Naive thymus-derived CD4-positive, alpha-beta T cell (primary cell): ENCODE measurements at regions of chr1 and their contacts with region 1.

Region 1: DNA sequence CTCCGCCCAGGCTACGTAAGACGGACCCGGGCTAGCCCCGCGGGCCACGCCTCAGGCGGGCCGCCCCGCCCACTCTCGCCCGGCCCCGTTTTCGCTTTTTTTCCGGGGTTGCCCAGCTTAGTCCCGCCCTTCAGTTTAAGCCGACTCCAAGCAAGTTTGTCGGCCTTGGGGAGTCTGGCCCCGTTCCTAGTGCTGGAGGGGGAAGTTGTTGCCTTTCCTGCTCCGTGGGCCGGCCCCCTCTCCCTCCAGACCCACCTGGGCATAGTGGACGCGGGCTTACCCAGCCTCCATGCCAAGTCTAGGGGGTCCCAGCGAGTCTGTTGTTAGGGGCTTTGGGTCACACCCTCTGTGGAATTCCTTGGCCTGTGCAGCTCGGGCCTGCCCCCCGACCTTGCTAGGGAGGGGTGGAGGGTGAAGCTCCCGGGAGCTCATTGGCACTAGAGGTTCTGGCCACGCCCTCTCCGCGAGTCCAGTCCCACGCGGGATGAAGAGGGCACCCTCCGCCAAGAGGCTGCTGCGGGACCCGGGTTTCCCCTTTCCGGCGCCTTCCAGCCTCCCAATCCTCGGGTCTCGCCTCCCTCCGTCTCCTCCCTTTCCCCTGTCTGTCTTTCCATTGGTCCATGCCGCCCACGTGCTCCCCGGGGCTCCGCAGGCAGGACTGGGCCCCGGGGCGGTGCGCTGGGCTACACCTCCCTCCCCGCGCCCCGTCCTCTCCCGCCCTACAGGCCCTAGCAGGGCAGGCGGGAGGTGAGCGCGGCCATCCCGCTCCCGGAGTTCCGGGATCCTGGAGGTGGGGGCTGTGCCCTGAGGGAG is 3.3 kb downstream of the RUSC1 start:
- DNase-seq: peak; percentile 75 to 95 (median 80)
- ATAC-seq: peak; percentile 86
- H3K4me3 ChIP-seq: peak overlapping the region; percentile 100
- H3K4me3 Mint-ChIP-seq: peak overlapping the region; percentile 80 to 91 (median 89)
- H3K27ac ChIP-seq: peak overlapping the region; percentile 90
- H3K27ac Mint-ChIP-seq: peak overlapping the region; percentile 44 to 86 (median 73)
- H3K4me1 ChIP-seq: peaks cover 0 to 12% of the 10 kb centered on the region in 2 donors
- H3K4me1 Mint-ChIP-seq: peaks cover 24 to 38% (median 31%) of the 10 kb centered on the region in 7 donors
- H3K27me3 ChIP-seq: no peaks in the 10 kb centered on the region
- H3K27me3 Mint-ChIP-seq: no peaks in the 10 kb centered on the region

Region 2: DNA sequence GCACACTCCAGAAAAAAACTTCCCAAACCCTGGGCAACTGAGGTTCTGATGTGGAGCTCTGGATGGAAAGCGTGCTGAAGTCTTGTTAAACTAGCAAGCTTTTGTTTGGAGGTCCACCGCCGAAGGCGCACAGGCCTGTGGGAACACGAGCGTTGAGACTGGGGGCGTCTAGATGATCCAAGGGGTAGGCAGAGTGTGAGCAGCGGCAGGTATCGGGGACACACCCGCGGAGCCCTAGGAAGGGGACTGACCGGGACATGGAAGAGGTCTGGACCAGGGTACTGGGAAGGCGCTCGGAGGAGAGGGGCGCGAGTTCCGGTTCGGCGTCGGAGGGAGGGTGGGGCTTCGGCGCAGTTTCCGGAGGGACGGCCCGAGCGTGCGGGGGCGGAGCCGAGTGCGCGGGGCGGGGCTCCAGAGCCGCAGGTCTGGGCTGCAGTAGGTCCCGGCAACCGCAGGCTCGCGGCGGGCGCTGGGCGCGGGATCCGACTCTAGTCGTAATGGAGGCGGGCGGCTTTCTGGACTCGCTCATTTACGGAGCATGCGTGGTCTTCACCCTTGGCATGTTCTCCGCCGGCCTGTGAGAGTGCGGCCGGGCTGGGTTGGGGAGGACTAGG is 188.5 kb before region 1 on chr1 and contains the start of gene SLC50A1:
- CTCF ChIA-PET with region 1: no interaction called
- POLR2A ChIA-PET with region 1: no interaction called
- intact Hi-C with region 1: loop called in 1 of 2 experiments (anchors 5 kb)
- DNase-seq: peak; percentile 86 to 96 (median 90)
- ATAC-seq: peak; percentile 93
- H3K4me3 ChIP-seq: peak within 1 kb of the TSS; percentile 99
- H3K4me3 Mint-ChIP-seq: peak within 1 kb of the TSS; percentile 91 to 100 (median 98)
- H3K27ac ChIP-seq: peak within 1 kb of the TSS; percentile 99
- H3K27ac Mint-ChIP-seq: peak within 1 kb of the TSS; percentile 95 to 100 (median 98)
- H3K4me1 ChIP-seq: peaks cover 8 to 15% of the 10 kb centered on the region in 2 donors
- H3K4me1 Mint-ChIP-seq: peaks cover 41 to 58% (median 46%) of the 10 kb centered on the region in 7 donors
- H3K27me3 ChIP-seq: no peaks in the 10 kb centered on the region
- H3K27me3 Mint-ChIP-seq: peaks cover 0 to 2% (median 0%) of the 10 kb centered on the region in 5 donors
- total RNA-seq, gene SLC50A1: 21.1 to 35.6 (median 24.3) TPM

Region 3: DNA sequence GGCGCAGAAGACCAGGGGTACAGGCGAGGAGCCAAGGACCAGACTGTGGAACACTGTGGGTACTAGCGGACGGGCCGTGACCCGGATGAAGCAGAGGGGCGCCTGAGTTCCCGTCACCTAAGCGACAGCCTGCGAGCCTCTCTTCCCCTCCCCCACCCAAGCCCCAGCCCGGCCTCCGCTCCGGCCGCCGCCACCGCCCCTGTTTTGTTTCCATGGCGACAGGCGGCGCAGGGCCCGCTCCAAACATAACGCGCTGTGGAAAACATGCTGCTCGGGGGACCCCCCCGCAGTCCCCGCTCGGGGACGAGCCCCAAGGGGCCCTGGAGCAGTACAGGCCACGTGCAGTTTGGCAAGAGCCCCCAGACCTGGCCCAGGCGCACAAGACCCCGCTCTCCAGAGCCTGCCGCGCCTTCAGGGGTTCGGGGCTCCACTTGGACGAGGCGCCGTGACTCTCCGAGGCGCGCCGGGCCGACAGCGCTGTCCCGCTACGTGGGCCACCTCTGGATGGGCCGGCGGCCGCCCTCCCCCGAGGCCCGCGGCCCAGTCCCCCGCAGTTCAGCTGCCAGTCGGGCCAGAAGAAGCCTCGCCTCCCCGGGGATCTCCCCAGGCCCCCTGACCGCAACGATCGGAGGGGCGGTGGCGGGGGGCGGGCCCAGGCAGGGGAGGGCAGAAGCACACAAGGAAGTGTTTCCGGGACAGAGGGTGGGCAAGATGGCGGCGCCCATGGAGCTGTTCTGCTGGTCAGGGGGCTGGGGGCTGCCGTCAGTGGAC is 115.3 kb before region 1 on chr1 and contains the start of gene MTX1:
- CTCF ChIA-PET with region 1: no interaction called
- POLR2A ChIA-PET with region 1: no interaction called
- intact Hi-C with region 1: loop called (anchors 1 kb)
- DNase-seq: peak; percentile 83 to 91 (median 88)
- ATAC-seq: peak; percentile 89
- H3K4me3 ChIP-seq: peak within 1 kb of the TSS; percentile 100
- H3K4me3 Mint-ChIP-seq: peak within 1 kb of the TSS; percentile 81 to 92 (median 88)
- H3K27ac ChIP-seq: peak within 1 kb of the TSS; percentile 100
- H3K27ac Mint-ChIP-seq: peak within 1 kb of the TSS; percentile 92 to 99 (median 96)
- H3K4me1 ChIP-seq: peaks cover 20 to 21% of the 10 kb centered on the region in 2 donors
- H3K4me1 Mint-ChIP-seq: peaks cover 19 to 30% (median 24%) of the 10 kb centered on the region in 7 donors
- H3K27me3 ChIP-seq: no peaks in the 10 kb centered on the region
- H3K27me3 Mint-ChIP-seq: no peaks in the 10 kb centered on the region
- total RNA-seq, gene MTX1: 19.5 to 40.8 (median 22.0) TPM

Region 4: DNA sequence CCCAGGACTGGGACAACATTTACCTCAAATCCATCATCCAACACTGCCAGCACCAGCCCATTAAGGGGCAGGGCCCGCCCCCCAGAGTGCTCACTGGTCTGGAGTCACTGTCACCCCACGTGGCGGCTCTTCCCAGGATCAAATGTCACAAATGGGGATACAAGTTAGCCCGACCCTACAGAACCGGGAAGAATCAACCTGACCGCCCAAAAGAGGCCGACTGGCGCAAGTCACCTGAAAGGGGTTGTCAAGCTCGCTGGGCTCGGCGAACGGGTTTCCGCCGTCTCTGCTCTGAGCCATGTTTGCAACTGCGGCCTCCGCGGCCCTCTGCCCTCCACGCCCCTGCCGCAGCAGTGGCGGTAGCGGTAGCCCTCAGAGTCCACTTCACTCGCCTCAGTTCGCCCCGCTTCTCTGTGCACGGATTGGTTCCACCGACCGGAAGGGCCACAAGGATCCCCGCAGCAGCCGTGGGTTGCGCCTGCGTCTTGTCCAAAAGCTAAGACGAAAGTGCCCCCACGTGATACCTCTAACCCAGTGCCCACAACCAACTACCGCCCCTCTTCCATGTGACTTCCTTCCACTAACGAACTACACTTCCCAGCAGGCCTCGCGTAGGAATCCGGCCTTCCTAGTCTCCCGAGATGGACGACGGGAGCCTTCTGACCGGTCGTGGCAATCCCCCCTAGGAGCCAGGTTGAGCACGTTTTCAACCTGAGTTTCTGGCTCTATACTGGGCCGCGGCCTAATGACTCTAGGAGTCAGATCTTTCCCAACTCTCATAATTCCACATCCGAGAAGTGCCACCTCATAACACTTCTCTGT is 61.9 kb before region 1 on chr1 and contains the start of gene SCAMP3:
- CTCF ChIA-PET with region 1: interaction called, 5 read pairs
- POLR2A ChIA-PET with region 1: interaction called, 15 read pairs
- intact Hi-C with region 1: no loop called
- DNase-seq: peak; percentile 52 to 89 (median 79)
- ATAC-seq: peak; percentile 99
- H3K4me3 ChIP-seq: peak within 1 kb of the TSS; percentile 88
- H3K4me3 Mint-ChIP-seq: peak within 1 kb of the TSS; percentile 81 to 100 (median 98)
- H3K27ac ChIP-seq: peak within 1 kb of the TSS; percentile 87
- H3K27ac Mint-ChIP-seq: peak within 1 kb of the TSS; percentile 89 to 98 (median 96)
- H3K4me1 ChIP-seq: peaks cover 18 to 19% of the 10 kb centered on the region in 2 donors
- H3K4me1 Mint-ChIP-seq: peaks cover 22 to 42% (median 33%) of the 10 kb centered on the region in 7 donors
- H3K27me3 ChIP-seq: no peaks in the 10 kb centered on the region
- H3K27me3 Mint-ChIP-seq: no peaks in the 10 kb centered on the region
- total RNA-seq, gene SCAMP3: 50.8 to 118 (median 100) TPM

Region 5: GRCh38 chr1:155562581-155563376 is 238.8 kb after region 1 on chr1 and contains the start of gene ASH1L:
- CTCF ChIA-PET with region 1: no interaction called
- POLR2A ChIA-PET with region 1: interaction called, 3 read pairs
- intact Hi-C with region 1: loop called (anchors 1 to 5 kb)
- DNase-seq: peak; percentile 85 to 94 (median 90)
- ATAC-seq: peak; percentile 90
- H3K4me3 ChIP-seq: peak within 1 kb of the TSS; percentile 100
- H3K4me3 Mint-ChIP-seq: peak within 1 kb of the TSS; percentile 91 to 100 (median 98)
- H3K27ac ChIP-seq: peak within 1 kb of the TSS; percentile 86
- H3K27ac Mint-ChIP-seq: peak within 1 kb of the TSS; percentile 95 to 100 (median 98)
- H3K4me1 ChIP-seq: peaks cover 26 to 32% of the 10 kb centered on the region in 2 donors
- H3K4me1 Mint-ChIP-seq: peaks cover 15 to 56% (median 47%) of the 10 kb centered on the region in 7 donors
- H3K27me3 ChIP-seq: no peaks in the 10 kb centered on the region
- H3K27me3 Mint-ChIP-seq: peaks cover 0 to 4% (median 0%) of the 10 kb centered on the region in 5 donors
- total RNA-seq, gene ASH1L: 57.2 to 109 (median 95.1) TPM

Region 6: GRCh38 chr1:156020292-156021089 is 696.5 kb after region 1 on chr1 and contains the start of gene SSR2:
- CTCF ChIA-PET with region 1: no interaction called
- POLR2A ChIA-PET with region 1: no interaction called
- intact Hi-C with region 1: loop called in 1 of 2 experiments (anchors 1 kb)
- DNase-seq: peak; percentile 44 to 91 (median 84)
- ATAC-seq: peak; percentile 99
- H3K4me3 ChIP-seq: peak within 1 kb of the TSS; percentile 87
- H3K4me3 Mint-ChIP-seq: peak within 1 kb of the TSS; percentile 87 to 99 (median 96)
- H3K27ac ChIP-seq: peak within 1 kb of the TSS; percentile 74
- H3K27ac Mint-ChIP-seq: peak within 1 kb of the TSS; percentile 89 to 99 (median 95)
- H3K4me1 ChIP-seq: peaks cover 4 to 9% of the 10 kb centered on the region in 2 donors
- H3K4me1 Mint-ChIP-seq: peaks cover 20 to 47% (median 41%) of the 10 kb centered on the region in 7 donors
- H3K27me3 ChIP-seq: no peaks in the 10 kb centered on the region
- H3K27me3 Mint-ChIP-seq: peaks cover 0 to 12% (median 0%) of the 10 kb centered on the region in 5 donors
- total RNA-seq, gene SSR2: 207 to 278 (median 256) TPM